ENCODE measurements at regions of chr7 and their contacts with region 1.

Region 1: DNA sequence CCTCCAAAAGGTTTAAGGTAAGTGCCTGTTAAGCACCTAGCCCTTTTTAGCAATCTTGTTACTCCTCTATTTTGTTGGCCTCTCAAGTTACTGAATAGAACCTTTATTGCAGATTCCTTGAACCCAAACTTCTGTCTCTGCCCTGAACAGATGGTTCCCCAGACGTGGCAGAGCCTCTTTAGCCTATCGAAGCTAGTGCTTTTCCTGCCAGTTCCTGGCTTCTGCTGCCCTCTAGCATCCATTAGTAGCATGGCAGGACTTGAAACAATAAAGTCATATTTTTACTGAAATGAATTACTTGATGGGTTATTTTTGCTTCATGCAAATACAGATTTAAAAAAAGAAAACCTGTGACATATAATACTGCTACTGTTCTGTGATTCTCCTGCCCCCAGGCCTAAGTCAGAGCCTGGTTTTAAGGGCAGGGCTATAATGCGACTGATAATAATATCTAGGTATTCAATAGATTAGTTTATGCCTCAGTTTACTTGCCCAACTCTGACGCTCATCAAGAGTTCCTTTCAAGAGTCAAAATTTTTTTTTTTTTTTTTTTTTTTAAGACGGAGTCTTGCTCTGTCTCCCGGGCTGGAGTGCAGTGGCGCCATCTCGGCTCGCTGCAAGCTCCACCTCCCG is 84.3 kb upstream of the PHF14 start:
- DNase-seq: peak; percentile 61
- ATAC-seq: peak; percentile 80
- H3K4me3 Mint-ChIP-seq: peak overlapping the region; percentile 4
- H3K27ac Mint-ChIP-seq: no peak overlapping the region
- H3K4me1 Mint-ChIP-seq: peaks cover 9% of the 10 kb centered on the region
- H3K27me3 Mint-ChIP-seq: no peaks in the 10 kb centered on the region

Region 2: DNA sequence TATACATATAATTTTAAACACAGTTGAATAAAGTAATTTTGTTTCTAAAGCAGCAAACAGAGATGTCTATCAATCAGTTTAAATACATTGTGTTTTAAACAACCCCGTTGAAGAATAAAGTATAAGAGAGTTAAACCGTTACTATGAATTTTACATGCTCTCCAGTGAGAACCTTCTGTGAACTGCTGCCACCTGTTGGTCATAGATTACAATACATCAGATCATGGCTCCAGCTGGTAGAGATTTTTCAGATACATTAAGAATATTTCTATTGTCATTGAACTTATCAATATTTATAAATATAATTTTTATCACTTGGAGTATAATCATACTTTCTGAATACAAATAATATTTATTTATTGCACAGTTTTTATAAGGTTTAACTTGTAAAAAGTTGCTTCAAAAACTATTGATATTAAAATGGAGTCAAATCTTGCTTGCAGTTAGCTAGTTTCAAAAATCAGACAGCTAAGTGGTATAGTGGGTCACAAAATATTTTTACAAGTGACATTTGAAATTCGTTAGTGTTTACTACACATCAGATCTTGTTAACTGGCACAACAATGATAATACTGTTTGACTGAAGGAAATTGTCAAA is 476.9 kb before region 1 on chr7:
- CTCF ChIA-PET with region 1: no interaction called
- POLR2A ChIA-PET with region 1: no interaction called
- intact Hi-C with region 1: loop called in 1 of 2 experiments (anchors 5 kb)
- DNase-seq: peak; percentile 19
- ATAC-seq: no peak
- H3K4me3 Mint-ChIP-seq: no peak overlapping the region
- H3K27ac Mint-ChIP-seq: no peak overlapping the region
- H3K4me1 Mint-ChIP-seq: no peaks in the 10 kb centered on the region
- H3K27me3 Mint-ChIP-seq: peaks cover 1% of the 10 kb centered on the region

Region 3: DNA sequence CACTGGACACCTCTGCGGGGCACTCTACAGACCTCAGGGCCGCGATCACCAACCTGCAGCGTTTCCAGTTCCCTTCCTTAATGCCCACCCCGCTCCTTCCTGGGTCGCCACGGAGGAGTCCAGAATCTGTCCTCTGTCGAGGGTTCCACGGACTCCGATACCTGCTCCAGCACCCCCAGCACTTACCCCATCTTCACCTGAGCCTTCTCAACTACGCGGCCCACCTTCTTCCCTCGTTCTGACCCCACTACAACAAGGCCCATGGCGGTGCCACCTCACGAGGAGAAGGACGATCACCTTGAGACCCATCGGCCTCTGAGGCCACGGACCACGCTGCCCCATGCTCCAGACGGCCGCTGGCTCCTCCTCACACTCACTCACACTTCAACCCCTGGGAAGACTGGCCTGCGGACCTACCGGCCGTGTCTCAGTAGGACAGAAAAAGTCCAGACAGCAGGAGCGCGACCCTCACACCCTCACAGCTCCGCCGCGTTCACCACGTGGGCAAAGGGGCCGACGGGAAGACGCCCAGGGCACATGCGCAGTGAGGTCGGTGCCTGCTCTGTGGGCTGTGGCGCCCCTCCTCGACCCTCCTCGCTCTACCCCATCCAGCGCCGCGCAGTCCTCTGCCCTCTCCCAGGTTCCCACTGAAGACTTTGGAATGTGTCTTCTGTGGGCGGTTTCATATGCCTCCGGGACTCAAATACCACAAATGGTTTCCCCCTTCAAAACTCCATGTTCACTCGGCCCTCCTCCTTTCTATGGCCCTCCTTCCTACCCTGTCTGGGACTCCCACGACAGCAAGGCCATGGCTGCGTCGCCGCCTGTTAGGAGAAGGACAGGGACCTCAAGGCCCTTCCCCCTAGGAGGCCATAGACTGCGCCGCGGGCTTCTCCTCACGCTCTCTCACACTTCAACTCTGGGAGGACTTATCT is 109.7 kb before region 1 on chr7:
- CTCF ChIA-PET with region 1: no interaction called
- POLR2A ChIA-PET with region 1: no interaction called
- intact Hi-C with region 1: no loop called
- DNase-seq: no peak
- ATAC-seq: no peak
- H3K4me3 Mint-ChIP-seq: no peak overlapping the region
- H3K27ac Mint-ChIP-seq: no peak overlapping the region
- H3K4me1 Mint-ChIP-seq: no peaks in the 10 kb centered on the region
- H3K27me3 Mint-ChIP-seq: no peaks in the 10 kb centered on the region

Region 4: DNA sequence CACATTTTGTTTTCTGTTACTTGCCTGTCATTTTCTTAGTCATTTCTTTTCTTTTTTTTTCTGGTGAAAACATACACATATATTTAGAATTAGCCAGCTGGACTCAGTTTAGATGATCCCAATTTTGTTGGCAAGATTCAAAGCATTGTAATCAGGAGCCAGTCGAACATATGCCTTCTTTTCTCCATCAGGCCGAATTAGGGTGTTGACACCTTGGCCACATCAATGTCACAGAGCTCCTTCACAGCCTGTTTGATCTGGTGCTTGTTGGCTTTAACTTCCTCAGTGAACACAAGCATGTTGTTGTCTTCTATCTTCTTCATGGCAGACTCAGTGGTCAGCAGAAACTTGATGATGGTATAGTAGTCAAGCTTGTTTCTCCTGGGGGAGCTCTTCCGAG is 116.9 kb after region 1 on chr7:
- CTCF ChIA-PET with region 1: no interaction called
- POLR2A ChIA-PET with region 1: no interaction called
- intact Hi-C with region 1: no loop called
- DNase-seq: no peak
- ATAC-seq: no peak
- H3K4me3 Mint-ChIP-seq: no peak overlapping the region
- H3K27ac Mint-ChIP-seq: no peak overlapping the region
- H3K4me1 Mint-ChIP-seq: peaks cover 14% of the 10 kb centered on the region
- H3K27me3 Mint-ChIP-seq: no peaks in the 10 kb centered on the region

Region 5: GRCh38 chr7:11212080-11212711 is 322.8 kb after region 1 on chr7:
- CTCF ChIA-PET with region 1: interaction called, 3 read pairs
- POLR2A ChIA-PET with region 1: no interaction called
- intact Hi-C with region 1: loop called in 1 of 2 experiments (anchors 1 kb)
- DNase-seq: peak; percentile 62
- ATAC-seq: peak; percentile 60
- H3K4me3 Mint-ChIP-seq: no peak overlapping the region
- H3K27ac Mint-ChIP-seq: no peak overlapping the region
- H3K4me1 Mint-ChIP-seq: peaks cover 4% of the 10 kb centered on the region
- H3K27me3 Mint-ChIP-seq: peaks cover 2% of the 10 kb centered on the region

Region 6: GRCh38 chr7:11343818-11344413 is 454.5 kb after region 1 on chr7:
- CTCF ChIA-PET with region 1: interaction called, 3 read pairs
- POLR2A ChIA-PET with region 1: no interaction called
- intact Hi-C with region 1: loop called (anchors 2 to 5 kb)
- DNase-seq: no peak
- ATAC-seq: no peak
- H3K4me3 Mint-ChIP-seq: no peak overlapping the region
- H3K27ac Mint-ChIP-seq: no peak overlapping the region
- H3K4me1 Mint-ChIP-seq: peaks cover 4% of the 10 kb centered on the region
- H3K27me3 Mint-ChIP-seq: peaks cover 12% of the 10 kb centered on the region

Measured in activated CD4-positive, alpha-beta T cell treated with anti-CD3 and anti-CD28 coated beads for 36 hours (primary cell).